ENCODE measurements at regions of chr22 and their contacts with region 1.

Region 1: GRCh38 chr22:49305214-49305909 is 522.3 kb downstream of the BRD1 start:
- DNase-seq: peak; percentile 65
- ATAC-seq: peak; percentile 86 to 91

Region 2: DNA sequence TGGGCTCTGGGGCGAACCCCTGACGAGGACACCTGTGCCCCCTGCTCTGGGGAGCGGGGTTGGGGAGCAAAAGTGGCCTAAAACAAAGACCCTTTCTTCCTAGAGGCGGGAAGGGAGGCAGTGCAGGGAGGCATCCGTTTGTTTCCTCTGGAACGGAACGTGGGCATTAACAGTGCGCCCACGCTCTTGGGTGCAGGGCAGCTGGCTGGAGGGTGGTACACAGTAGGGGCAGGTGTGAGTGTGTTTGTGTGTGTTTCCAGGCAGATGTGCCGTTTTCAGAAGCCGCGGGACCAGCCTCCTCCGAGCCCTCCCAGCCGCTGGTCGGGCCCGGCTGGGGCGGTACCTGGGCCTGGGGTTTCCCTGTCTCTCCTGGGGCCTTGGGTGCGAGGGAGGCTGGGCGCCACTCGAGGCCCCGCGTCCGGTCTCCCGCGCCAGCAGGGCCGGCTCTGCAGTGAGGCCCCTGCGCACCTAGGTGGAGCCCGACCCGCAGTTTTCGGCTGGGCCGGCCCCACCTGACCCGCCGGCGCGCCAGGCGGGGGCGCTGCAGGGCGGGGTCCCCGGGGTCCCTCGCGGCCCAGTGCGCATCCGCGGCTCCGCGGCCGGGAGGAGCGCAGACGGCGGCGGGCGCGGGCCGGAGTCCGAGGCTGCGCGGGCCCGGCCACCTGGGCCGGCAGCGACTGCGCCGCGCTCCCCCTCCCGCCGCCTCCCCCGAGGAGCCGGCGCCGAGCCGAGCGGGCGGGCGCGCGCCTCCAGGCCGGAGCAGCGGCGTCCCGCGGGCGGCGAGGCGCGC is 730.4 kb before region 1 on chr22:
- intact Hi-C with region 1: loop called in 1 of 2 experiments (anchors 5 kb)
- DNase-seq: peak; percentile 44
- ATAC-seq: peak in 1 of 2 donors; percentile 78

Region 3: GRCh38 chr22:49046546-49047361 is 258.6 kb before region 1 on chr22:
- intact Hi-C with region 1: loop called (anchors 2 kb)
- DNase-seq: peak; percentile 62
- ATAC-seq: peak; percentile 73 to 88

Region 4: GRCh38 chr22:49807780-49808708 is 502.7 kb after region 1 on chr22:
- intact Hi-C with region 1: no loop called
- DNase-seq: no peak
- ATAC-seq: no peak